Heart right ventricle (tissue), 16 donors: ENCODE measurements at regions of chr2 and their contacts with region 1.

Region 1: GRCh38 chr2:118088051-118089024 is at the start of gene INSIG2:
- DNase-seq: peak; percentile 91 to 93
- ATAC-seq: peak; percentile 99 to 100 (median 99)
- H3K4me3 ChIP-seq: peak within 1 kb of the TSS; percentile 76 to 89 (median 82)
- H3K27ac ChIP-seq: peak within 1 kb of the TSS in 9 of 10 donors; percentile 1 to 87 (median 59)
- H3K4me1 ChIP-seq: peaks cover 0 to 29% (median 17%) of the 10 kb centered on the region in 9 donors
- H3K27me3 ChIP-seq: peaks cover 0 to 4% (median 0%) of the 10 kb centered on the region in 7 donors
- CTCF ChIP-seq: no peak
- total RNA-seq, gene INSIG2: 12.6 to 19.3 (median 13.8) TPM

Region 2: DNA sequence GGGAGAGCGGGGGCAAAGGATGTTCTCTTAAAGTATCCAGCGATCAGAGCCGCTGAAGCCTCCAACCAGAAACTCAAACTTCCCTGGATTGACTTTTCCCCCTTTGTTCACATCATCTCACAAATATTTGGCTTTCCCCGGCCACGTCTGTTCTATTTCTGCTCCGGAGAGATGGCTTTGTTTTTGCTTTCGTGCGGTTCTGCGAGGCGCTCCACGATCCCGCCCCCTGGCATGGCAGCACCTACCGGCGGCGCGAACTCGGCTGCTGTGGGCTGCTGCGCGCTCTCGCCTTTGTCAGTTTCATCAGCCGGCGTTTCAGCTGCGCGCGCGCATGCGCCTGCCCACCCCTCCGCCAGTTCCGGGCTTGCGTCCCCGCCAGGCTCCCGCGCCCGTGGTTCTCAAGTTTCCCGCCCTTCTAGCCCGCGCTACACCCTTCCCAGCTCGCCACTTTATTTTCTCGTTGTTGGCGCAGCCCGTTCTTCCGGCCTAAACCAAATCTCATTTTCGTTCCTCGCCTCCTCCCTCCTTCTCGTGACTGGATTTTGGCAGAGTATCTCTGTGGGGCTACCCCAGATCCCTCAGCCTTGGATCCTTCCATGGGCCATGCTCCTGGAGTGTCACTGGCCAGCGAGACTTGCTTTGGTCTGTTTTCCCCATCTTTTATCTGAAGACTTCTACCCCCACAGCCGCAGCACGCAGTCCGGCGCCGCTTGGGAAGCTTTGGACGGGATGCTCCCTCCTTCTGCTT is 97.9 kb after region 1 on chr2:
- intact Hi-C with region 1: loop called in 1 of 10 experiments (anchors 10 kb)
- DNase-seq: peak; percentile 85 to 88
- ATAC-seq: peak; percentile 93 to 98 (median 97)
- H3K4me3 ChIP-seq: peak overlapping the region; percentile 19 to 93 (median 56)
- H3K27ac ChIP-seq: peak overlapping the region in 9 of 10 donors; percentile 22 to 77 (median 65)
- H3K4me1 ChIP-seq: peaks cover 0 to 14% (median 8%) of the 10 kb centered on the region in 9 donors
- H3K27me3 ChIP-seq: peaks cover 0 to 17% (median 9%) of the 10 kb centered on the region in 7 donors
- CTCF ChIP-seq: peak in 1 of 9 donors; percentile 25